K562 (cell line): ENCODE measurements at regions of chr7 and their contacts with region 1.

Region 1: DNA sequence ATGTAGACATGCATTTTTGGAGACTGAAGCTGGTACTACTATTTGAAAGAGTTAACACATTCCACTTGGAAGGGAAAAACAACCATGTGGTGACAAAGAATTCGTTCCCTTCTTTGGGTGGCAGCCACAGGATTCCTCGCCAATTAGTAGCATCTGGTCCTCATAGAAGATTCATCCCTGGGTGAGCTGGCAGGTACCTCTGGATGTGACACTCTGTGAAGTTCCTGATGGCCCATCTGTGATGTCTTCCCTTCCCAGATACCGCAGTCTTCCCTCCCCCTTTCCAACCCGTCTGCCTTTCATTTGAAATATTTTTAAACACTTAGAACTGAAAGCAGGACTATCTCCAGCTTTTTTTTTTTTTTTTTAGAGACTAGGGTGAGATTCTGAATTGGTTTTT is 569.5 kb downstream of the TYW1 start:
- DNase-seq: no peak
- ATAC-seq: no peak
- H3K4me3 ChIP-seq: no peak overlapping the region
- H3K27ac ChIP-seq: no peak overlapping the region
- H3K4me1 ChIP-seq: no peaks in the 10 kb centered on the region
- H3K27me3 ChIP-seq: no peaks in the 10 kb centered on the region; a peak in 1 of 5 replicates
- CTCF ChIP-seq: no peak
- EP300 ChIP-seq: no peak
- POLR2A ChIP-seq: no peak
- RAD21 ChIP-seq: no peak

Region 2: DNA sequence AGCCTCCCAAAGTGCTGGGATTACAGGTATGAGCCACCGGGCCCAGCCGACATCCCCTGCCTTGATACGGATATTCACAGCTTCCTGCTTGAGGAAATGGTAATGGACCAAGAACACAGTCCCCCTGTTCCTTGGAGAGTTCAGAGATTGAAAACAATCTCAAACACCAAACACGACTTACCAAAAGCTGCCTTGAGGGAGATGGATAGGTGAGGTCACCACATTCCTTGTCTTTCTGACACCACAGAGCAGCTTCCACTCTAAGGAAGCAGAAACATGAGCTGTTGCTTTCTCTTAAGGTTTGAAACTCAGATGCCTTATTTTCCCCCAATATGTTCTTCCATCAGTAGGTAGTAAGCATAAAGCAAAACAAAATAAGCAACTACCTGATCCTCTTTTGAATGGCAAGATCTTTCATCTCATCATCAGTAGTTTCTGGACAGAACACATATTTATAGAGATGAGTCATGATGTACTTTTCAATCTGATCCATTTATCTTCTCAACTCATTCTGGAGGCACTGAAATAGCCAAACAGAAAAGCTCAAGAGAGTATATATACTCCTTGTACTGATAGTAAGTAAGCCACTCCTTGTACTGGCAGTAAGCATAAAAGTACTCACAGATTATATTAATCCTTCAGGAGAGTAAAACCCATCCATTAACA is 1136.5 kb before region 1 on chr7:
- CTCF ChIA-PET with region 1: no interaction called
- POLR2A ChIA-PET with region 1: no interaction called
- in situ Hi-C with region 1: loop called (anchors 10 kb)
- intact Hi-C with region 1: no loop called
- DNase-seq: no peak
- ATAC-seq: no peak
- H3K4me3 ChIP-seq: no peak overlapping the region
- H3K27ac ChIP-seq: no peak overlapping the region
- H3K4me1 ChIP-seq: no peaks in the 10 kb centered on the region; a peak in 1 of 5 replicates
- H3K27me3 ChIP-seq: no peaks in the 10 kb centered on the region
- CTCF ChIP-seq: no peak
- EP300 ChIP-seq: no peak
- POLR2A ChIP-seq: no peak
- RAD21 ChIP-seq: no peak

Region 3: GRCh38 chr7:68088879-68089278 is 522.8 kb after region 1 on chr7:
- CTCF ChIA-PET with region 1: no interaction called
- POLR2A ChIA-PET with region 1: no interaction called
- in situ Hi-C with region 1: no loop called
- intact Hi-C with region 1: no loop called
- DNase-seq: no peak
- ATAC-seq: peak; percentile 27; the same call in 1 of the 3 replicates
- H3K4me3 ChIP-seq: no peak overlapping the region
- H3K27ac ChIP-seq: no peak overlapping the region
- H3K4me1 ChIP-seq: no peaks in the 10 kb centered on the region
- H3K27me3 ChIP-seq: no peaks in the 10 kb centered on the region
- CTCF ChIP-seq: no peak
- EP300 ChIP-seq: no peak
- POLR2A ChIP-seq: no peak
- RAD21 ChIP-seq: no peak